Activated CD8-positive, alpha-beta T cell treated with anti-CD3 and anti-CD28 coated beads for 36 hours (primary cell): ENCODE measurements at regions of chr22 and their contacts with region 1.

Region 1: DNA sequence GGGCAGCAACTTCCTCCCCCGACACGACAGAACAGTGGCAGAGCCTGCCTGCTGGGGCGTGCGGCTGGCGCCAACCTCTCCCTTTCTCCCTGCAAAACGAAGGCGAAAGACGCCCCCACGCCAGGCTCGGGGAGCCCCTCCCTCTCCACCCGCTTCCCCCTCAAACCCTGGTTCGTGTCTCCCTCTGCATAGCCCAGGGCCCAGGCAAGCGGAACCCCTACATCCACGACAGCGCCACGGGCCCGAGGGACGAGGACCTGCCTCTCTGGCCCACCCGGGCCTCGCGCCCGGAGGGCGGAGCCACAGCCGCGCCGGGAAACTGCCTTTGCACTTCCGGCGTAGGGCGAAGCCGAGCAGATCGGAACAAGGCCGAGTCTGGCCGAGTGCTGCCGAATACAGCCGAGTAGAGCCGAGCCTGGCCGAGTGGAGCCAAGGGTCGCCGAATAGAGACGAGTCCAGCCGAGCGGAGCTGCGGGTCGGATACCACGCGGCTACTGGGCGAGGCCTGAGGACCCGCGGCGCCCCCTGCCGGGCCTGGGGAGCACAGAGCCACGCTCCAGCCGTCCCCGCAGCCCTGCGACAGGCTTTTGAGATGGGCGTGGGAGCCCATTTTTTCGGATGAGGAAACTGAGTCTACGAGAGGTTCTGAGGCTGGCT is 11.2 kb upstream of the C1QTNF6 start:
- DNase-seq: peak; percentile 100
- ATAC-seq: peak; percentile 96
- H3K4me3 Mint-ChIP-seq: peak overlapping the region; percentile 86
- H3K27ac Mint-ChIP-seq: peak overlapping the region; percentile 98
- H3K4me1 Mint-ChIP-seq: peaks cover 70% of the 10 kb centered on the region
- H3K27me3 Mint-ChIP-seq: no peaks in the 10 kb centered on the region
- CTCF ChIP-seq: peak; percentile 85

Region 2: GRCh38 chr22:37043828-37044538 is 155.2 kb before region 1 on chr22:
- CTCF ChIA-PET with region 1: interaction called, 17 read pairs
- POLR2A ChIA-PET with region 1: interaction called, 3 read pairs
- intact Hi-C with region 1: no loop called
- DNase-seq: peak; percentile 74
- ATAC-seq: peak; percentile 90
- H3K4me3 Mint-ChIP-seq: no peak overlapping the region
- H3K27ac Mint-ChIP-seq: no peak overlapping the region
- H3K4me1 Mint-ChIP-seq: peaks cover 21% of the 10 kb centered on the region
- H3K27me3 Mint-ChIP-seq: peaks cover 1% of the 10 kb centered on the region
- CTCF ChIP-seq: peak; percentile 75

Region 3: DNA sequence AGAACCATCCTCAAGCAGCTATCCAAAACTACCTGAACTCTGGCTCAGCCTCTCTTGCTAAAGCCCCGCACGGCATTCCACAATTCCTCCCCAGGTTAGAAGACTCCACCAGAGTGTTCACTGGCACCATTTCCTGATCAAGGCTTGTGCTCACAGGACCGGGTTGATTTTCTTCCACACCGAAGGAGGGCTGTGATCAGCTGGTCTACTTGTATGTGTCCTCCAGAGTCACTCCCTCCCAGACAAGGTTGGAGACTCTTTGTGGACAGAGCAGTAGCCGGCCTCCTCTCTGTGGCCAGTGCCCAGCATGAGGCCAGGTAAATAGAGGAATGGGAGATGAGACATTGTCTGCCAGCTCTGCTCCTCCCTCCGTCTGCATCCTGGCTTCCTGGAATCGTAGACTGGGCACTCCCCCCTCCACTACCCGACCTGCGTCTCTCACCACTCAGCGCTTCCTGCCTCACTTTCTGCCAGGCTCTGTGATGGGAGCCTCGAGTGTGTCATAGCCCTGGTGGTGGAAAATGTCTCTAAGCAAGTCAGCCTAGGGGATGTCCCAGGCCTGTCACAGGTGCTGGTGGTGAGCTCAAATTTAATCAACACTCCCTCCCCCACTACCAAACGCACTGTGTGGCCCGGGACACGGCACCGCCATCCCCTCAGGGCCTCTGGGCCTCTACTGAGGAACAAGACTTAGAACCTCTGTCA is 77.2 kb before region 1 on chr22:
- CTCF ChIA-PET with region 1: interaction called, 60 read pairs
- POLR2A ChIA-PET with region 1: interaction called, 12 read pairs
- intact Hi-C with region 1: no loop called
- DNase-seq: peak; percentile 97
- ATAC-seq: peak; percentile 93
- H3K4me3 Mint-ChIP-seq: peak overlapping the region; percentile 87
- H3K27ac Mint-ChIP-seq: peak overlapping the region; percentile 100
- H3K4me1 Mint-ChIP-seq: peaks cover 86% of the 10 kb centered on the region
- H3K27me3 Mint-ChIP-seq: no peaks in the 10 kb centered on the region
- CTCF ChIP-seq: no peak

Region 4: GRCh38 chr22:37178350-37179135 is 20.7 kb before region 1 on chr22:
- CTCF ChIA-PET with region 1: interaction called, 15 read pairs
- POLR2A ChIA-PET with region 1: interaction called, 4 read pairs
- intact Hi-C with region 1: no loop called
- DNase-seq: no peak
- ATAC-seq: no peak
- H3K4me3 Mint-ChIP-seq: no peak overlapping the region
- H3K27ac Mint-ChIP-seq: no peak overlapping the region
- H3K4me1 Mint-ChIP-seq: peaks cover 22% of the 10 kb centered on the region
- H3K27me3 Mint-ChIP-seq: no peaks in the 10 kb centered on the region
- CTCF ChIP-seq: no peak

Region 5: GRCh38 chr22:37229805-37230672 is 30.8 kb after region 1 on chr22:
- CTCF ChIA-PET with region 1: interaction called, 22 read pairs
- POLR2A ChIA-PET with region 1: interaction called, 18 read pairs
- intact Hi-C with region 1: no loop called
- DNase-seq: peak; percentile 98
- ATAC-seq: peak; percentile 61
- H3K4me3 Mint-ChIP-seq: peak overlapping the region; percentile 76
- H3K27ac Mint-ChIP-seq: peak overlapping the region; percentile 98
- H3K4me1 Mint-ChIP-seq: peaks cover 85% of the 10 kb centered on the region
- H3K27me3 Mint-ChIP-seq: no peaks in the 10 kb centered on the region
- CTCF ChIP-seq: no peak

Region 6: GRCh38 chr22:37260901-37261336 is 61.7 kb after region 1 on chr22:
- CTCF ChIA-PET with region 1: interaction called, 17 read pairs
- POLR2A ChIA-PET with region 1: no interaction called
- intact Hi-C with region 1: no loop called
- DNase-seq: peak; percentile 77
- ATAC-seq: peak; percentile 86
- H3K4me3 Mint-ChIP-seq: no peak overlapping the region
- H3K27ac Mint-ChIP-seq: peak overlapping the region; percentile 58
- H3K4me1 Mint-ChIP-seq: peaks cover 28% of the 10 kb centered on the region
- H3K27me3 Mint-ChIP-seq: no peaks in the 10 kb centered on the region
- CTCF ChIP-seq: peak; percentile 97

Region 7: DNA sequence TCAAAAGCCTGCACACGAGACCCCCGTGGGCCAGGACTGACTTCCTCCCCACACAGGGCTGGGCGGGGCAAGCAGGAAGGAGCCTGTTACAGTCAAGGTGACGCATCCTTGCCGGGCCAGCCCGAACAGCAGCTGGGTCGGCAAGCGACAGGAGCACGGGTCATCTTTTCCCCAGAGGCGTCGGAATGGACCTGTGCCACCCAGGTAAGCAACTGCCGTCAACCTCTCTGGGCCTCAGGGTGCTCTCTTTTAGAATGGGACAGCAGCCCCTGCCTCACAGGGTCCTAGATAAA is 83.1 kb after region 1 on chr22 and contains the start of gene CYTH4:
- CTCF ChIA-PET with region 1: no interaction called
- POLR2A ChIA-PET with region 1: no interaction called
- intact Hi-C with region 1: no loop called
- DNase-seq: peak; percentile 91
- ATAC-seq: peak; percentile 86
- H3K4me3 Mint-ChIP-seq: peak within 1 kb of the TSS; percentile 86
- H3K27ac Mint-ChIP-seq: peak within 1 kb of the TSS; percentile 99
- H3K4me1 Mint-ChIP-seq: peaks cover 61% of the 10 kb centered on the region
- H3K27me3 Mint-ChIP-seq: no peaks in the 10 kb centered on the region
- CTCF ChIP-seq: no peak
- total RNA-seq, gene CYTH4: 33.2 to 33.4 TPM

Region 8: GRCh38 chr22:37309211-37310074 is 110.2 kb after region 1 on chr22:
- CTCF ChIA-PET with region 1: no interaction called
- POLR2A ChIA-PET with region 1: no interaction called
- intact Hi-C with region 1: no loop called
- DNase-seq: peak; percentile 78
- ATAC-seq: peak; percentile 51
- H3K4me3 Mint-ChIP-seq: peak overlapping the region; percentile 39
- H3K27ac Mint-ChIP-seq: peak overlapping the region; percentile 85
- H3K4me1 Mint-ChIP-seq: peaks cover 92% of the 10 kb centered on the region
- H3K27me3 Mint-ChIP-seq: no peaks in the 10 kb centered on the region
- CTCF ChIP-seq: no peak

Region 9: GRCh38 chr22:37370306-37370979 is 171.2 kb after region 1 on chr22:
- CTCF ChIA-PET with region 1: no interaction called
- POLR2A ChIA-PET with region 1: no interaction called
- intact Hi-C with region 1: no loop called
- DNase-seq: no peak
- ATAC-seq: no peak
- H3K4me3 Mint-ChIP-seq: no peak overlapping the region
- H3K27ac Mint-ChIP-seq: no peak overlapping the region
- H3K4me1 Mint-ChIP-seq: no peaks in the 10 kb centered on the region
- H3K27me3 Mint-ChIP-seq: no peaks in the 10 kb centered on the region
- CTCF ChIP-seq: no peak